CD8-positive, alpha-beta T cell (primary cell): ENCODE measurements at regions of chr10 and their contacts with region 1.

Region 1: GRCh38 chr10:126045861-126046260 is 149.5 kb downstream of the FANK1 start:
- DNase-seq: no peak
- ATAC-seq: no peak
- H3K4me3 ChIP-seq: no peak overlapping the region
- H3K4me3 Mint-ChIP-seq: no peak overlapping the region
- H3K27ac ChIP-seq: no peak overlapping the region
- H3K27ac Mint-ChIP-seq: no peak overlapping the region
- H3K4me1 ChIP-seq: peaks cover 10% of the 10 kb centered on the region
- H3K4me1 Mint-ChIP-seq: peaks cover 13% of the 10 kb centered on the region
- H3K27me3 ChIP-seq: no peaks in the 10 kb centered on the region
- H3K27me3 Mint-ChIP-seq: peaks cover 5% of the 10 kb centered on the region
- CTCF ChIP-seq: no peak

Region 2: GRCh38 chr10:126013489-126014281 is 32.2 kb before region 1 on chr10:
- CTCF ChIA-PET with region 1: no interaction called
- POLR2A ChIA-PET with region 1: no interaction called
- intact Hi-C with region 1: loop called in 1 of 2 experiments (anchors 1 kb)
- DNase-seq: peak in 4 of 9 experiments; percentile 7 to 38 (median 32)
- ATAC-seq: no peak
- H3K4me3 ChIP-seq: no peak overlapping the region
- H3K4me3 Mint-ChIP-seq: no peak overlapping the region
- H3K27ac ChIP-seq: no peak overlapping the region
- H3K27ac Mint-ChIP-seq: no peak overlapping the region
- H3K4me1 ChIP-seq: no peaks in the 10 kb centered on the region
- H3K4me1 Mint-ChIP-seq: no peaks in the 10 kb centered on the region
- H3K27me3 ChIP-seq: no peaks in the 10 kb centered on the region
- H3K27me3 Mint-ChIP-seq: no peaks in the 10 kb centered on the region
- CTCF ChIP-seq: no peak

Region 3: DNA sequence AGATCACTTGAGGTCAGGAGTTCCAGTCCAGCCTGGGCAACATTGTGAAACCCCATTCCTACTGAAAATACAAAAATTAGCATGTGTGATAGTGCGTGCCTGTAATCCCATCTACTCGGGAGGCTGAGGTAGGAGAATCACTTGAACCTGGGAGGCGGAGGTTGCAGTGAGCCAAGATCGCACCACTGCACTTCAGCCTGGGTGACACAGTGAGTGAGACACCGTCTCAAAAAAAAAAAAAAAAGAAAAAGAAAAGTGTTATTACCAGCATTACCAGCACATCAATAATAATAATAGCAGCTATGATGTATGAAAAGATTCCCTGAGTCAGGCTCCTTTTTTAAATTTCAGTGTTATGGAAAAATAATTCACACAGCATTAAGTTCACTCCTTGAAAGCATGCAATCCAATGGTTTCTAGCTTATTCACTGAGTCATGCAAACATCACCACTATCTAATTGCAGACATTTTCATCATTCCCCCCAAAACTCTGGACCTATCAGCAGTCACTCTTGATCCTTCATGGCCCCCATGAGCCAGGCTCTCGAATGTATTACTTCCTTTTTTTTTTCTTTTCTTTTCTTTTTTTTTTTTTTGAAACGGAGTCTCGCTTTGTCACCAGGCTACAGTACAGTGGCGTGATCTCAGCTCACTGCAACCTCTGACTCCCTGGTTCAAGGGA is 78.9 kb after region 1 on chr10:
- CTCF ChIA-PET with region 1: no interaction called
- POLR2A ChIA-PET with region 1: no interaction called
- intact Hi-C with region 1: no loop called
- DNase-seq: no peak
- ATAC-seq: no peak
- H3K4me3 ChIP-seq: no peak overlapping the region
- H3K4me3 Mint-ChIP-seq: no peak overlapping the region
- H3K27ac ChIP-seq: no peak overlapping the region
- H3K27ac Mint-ChIP-seq: no peak overlapping the region
- H3K4me1 ChIP-seq: no peaks in the 10 kb centered on the region
- H3K4me1 Mint-ChIP-seq: no peaks in the 10 kb centered on the region
- H3K27me3 ChIP-seq: no peaks in the 10 kb centered on the region
- H3K27me3 Mint-ChIP-seq: no peaks in the 10 kb centered on the region
- CTCF ChIP-seq: no peak